ENCODE measurements at regions of chr6 and their contacts with region 1.

Region 1: GRCh38 chr6:18503593-18504231 is 116.6 kb downstream of the RNF144B start:
- DNase-seq: peak in 1 of 2 donors; percentile 65
- ATAC-seq: peak; percentile 77 to 90 (median 86)
- H3K4me3 ChIP-seq: peak overlapping the region in 8 of 10 donors; percentile 14 to 45 (median 41)
- H3K27ac ChIP-seq: peak overlapping the region in 5 of 10 donors; percentile 10 to 81 (median 47)
- H3K4me1 ChIP-seq: peaks cover 0 to 31% (median 0%) of the 10 kb centered on the region in 9 donors
- H3K27me3 ChIP-seq: peaks cover 0 to 7% (median 0%) of the 10 kb centered on the region in 7 donors
- CTCF ChIP-seq: peak; percentile 70 to 98 (median 90)

Region 2: GRCh38 chr6:18186033-18186432 is 317.7 kb before region 1 on chr6:
- intact Hi-C with region 1: loop called in 1 of 10 experiments (anchors 10 kb)
- DNase-seq: no peak
- ATAC-seq: peak in 5 of 8 donors; percentile 24 to 84 (median 60)
- H3K4me3 ChIP-seq: no peak overlapping the region
- H3K27ac ChIP-seq: peak overlapping the region in 1 of 10 donors; percentile 41
- H3K4me1 ChIP-seq: peaks cover 0 to 19% (median 5%) of the 10 kb centered on the region in 9 donors
- H3K27me3 ChIP-seq: no peaks in the 10 kb centered on the region
- CTCF ChIP-seq: no peak

Region 3: DNA sequence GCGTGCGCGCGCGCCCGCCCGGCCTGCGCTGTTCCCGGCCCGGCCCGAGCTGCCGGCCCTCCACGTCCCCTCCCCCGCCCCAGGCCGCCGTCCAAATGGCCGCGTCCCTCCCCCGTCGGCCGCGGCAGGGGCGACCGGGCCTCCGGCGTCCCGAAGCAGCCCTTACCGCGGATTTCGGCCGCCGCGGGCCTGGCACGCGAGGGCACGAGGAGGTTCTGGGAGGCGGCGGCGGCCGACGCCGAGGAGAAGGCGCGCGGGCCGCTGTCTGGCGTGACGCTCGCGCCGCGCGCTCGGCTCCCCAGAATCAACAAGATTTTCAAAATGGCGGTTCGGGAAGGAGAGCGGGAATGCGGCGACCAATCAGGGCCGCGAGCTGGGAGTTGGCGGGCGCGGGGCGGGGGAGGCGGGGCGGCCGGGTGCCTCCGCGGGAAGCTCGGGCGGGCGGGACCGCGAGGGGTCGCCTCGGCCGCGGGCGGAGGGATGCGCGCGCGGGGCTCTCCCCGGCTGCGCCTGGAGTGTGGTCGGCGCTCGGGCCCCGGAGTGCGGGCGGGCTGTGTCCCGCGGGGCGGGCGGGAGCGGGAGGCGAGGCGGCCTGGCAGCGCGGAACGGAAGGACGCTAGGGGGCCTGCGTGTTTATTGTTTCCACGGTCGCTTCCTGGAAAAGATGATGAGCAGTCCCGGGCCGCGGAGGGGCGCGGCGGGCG is 239.3 kb before region 1 on chr6 and contains the start of gene DEK:
- intact Hi-C with region 1: loop called in 2 of 10 experiments (anchors 5 kb)
- DNase-seq: peak; percentile 89 to 90
- ATAC-seq: peak; percentile 77 to 92 (median 88)
- H3K4me3 ChIP-seq: peak within 1 kb of the TSS; percentile 74 to 95 (median 90)
- H3K27ac ChIP-seq: peak within 1 kb of the TSS; percentile 89 to 98 (median 94)
- H3K4me1 ChIP-seq: peaks cover 0 to 45% (median 38%) of the 10 kb centered on the region in 9 donors
- H3K27me3 ChIP-seq: no peaks in the 10 kb centered on the region
- CTCF ChIP-seq: peak; percentile 36 to 78 (median 62)
- total RNA-seq, gene DEK: 38.6 to 78.3 (median 55.6) TPM

Region 4: GRCh38 chr6:18323935-18324705 is 179.6 kb before region 1 on chr6:
- intact Hi-C with region 1: loop called (anchors 1 to 2 kb)
- DNase-seq: peak in 1 of 2 donors; percentile 9
- ATAC-seq: peak in 7 of 8 donors; percentile 42 to 79 (median 70)
- H3K4me3 ChIP-seq: no peak overlapping the region
- H3K27ac ChIP-seq: no peak overlapping the region
- H3K4me1 ChIP-seq: peaks cover 0 to 30% (median 0%) of the 10 kb centered on the region in 9 donors
- H3K27me3 ChIP-seq: no peaks in the 10 kb centered on the region
- CTCF ChIP-seq: peak; percentile 54 to 87 (median 79)

Region 5: DNA sequence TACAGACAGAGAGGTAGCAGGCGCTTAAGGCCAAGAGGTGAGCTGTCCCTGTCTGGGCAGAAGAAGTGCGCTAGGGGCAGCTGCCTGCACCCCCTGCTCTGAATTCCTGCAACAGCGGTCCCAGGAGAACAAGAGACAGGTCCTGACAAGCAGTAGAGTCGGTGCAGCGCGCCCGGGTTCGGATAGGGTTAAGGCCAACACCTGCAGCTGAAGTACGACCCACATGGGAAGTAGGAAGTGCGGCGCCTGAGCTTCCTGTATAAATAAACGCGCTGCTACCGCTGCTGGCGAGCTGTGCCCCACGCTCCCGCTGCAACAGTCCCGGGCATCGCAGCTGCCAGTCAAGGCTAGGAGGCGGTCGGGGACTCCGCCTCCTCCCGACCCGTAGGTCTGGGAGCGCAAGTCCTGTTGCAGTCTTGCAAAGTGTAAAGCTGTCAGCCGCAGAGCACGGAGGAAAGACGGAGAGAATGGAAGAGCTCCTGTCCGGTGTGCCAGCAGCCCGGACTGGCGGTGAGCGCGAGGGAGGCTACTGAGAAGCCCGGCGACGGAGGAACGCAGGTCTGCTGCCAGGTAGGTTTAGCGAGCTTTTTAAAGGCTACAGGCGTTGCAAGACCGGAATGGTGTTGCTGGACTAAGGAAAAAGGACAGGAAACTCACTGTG is 116.5 kb before region 1 on chr6 and contains the start of gene RNF144B:
- intact Hi-C with region 1: loop called in 2 of 10 experiments (anchors 5 kb)
- DNase-seq: peak; percentile 76 to 83
- ATAC-seq: peak; percentile 89 to 99 (median 96)
- H3K4me3 ChIP-seq: peak within 1 kb of the TSS; percentile 54 to 88 (median 68)
- H3K27ac ChIP-seq: peak within 1 kb of the TSS; percentile 31 to 89 (median 82)
- H3K4me1 ChIP-seq: peaks cover 0 to 66% (median 30%) of the 10 kb centered on the region in 9 donors
- H3K27me3 ChIP-seq: no peaks in the 10 kb centered on the region
- CTCF ChIP-seq: no peak
- total RNA-seq, gene RNF144B: 4.6 to 25.5 (median 12.1) TPM